HCT116 (cell line): ENCODE measurements at regions of chr12 and their contacts with region 1.

Region 1: DNA sequence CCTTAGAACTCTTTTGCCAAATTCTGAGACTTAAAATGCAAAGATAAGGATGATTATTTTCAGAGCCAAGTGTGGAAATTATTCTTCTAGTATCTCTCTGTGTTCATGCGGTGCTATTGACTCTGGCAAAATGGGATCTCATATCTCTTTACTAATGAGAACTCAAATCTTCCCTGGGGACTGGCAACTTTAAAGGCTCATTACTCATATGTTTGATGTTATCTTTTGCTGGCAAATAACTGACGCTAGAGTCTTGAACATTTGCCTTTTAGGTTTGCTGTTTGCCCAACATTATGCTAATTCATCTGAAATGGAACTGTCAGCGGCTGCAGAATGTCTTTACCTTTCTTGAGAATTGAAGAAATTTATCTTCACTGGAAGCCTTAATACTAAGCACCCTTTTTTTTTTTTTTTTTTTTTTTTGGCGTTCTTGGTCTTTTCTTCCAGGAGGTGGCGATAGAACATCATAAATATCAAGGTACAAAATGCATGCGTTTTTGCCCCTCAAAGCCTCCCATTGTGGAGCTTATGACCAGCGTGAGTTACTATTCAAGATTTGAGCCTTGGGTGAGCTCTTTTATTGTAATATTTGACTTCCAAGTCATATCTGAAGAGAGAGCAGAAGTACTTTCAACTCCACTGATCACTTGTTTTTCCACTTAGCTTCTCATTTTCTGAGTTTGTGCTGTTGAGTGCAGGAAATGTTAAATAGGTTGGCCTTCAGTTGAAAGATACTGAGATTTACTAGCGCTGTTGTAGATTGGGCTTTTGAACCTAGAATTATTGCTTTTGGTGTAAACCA is 86.6 kb downstream of the CAND1 start:
- DNase-seq: peak; percentile 34
- ATAC-seq: peak; percentile 73
- H3K4me3 ChIP-seq: no peak overlapping the region
- H3K27ac ChIP-seq: no peak overlapping the region
- H3K4me1 ChIP-seq: no peaks in the 10 kb centered on the region
- H3K27me3 ChIP-seq: no peaks in the 10 kb centered on the region
- CTCF ChIP-seq: peak; percentile 48 to 82 (median 67)
- POLR2A ChIP-seq: no peak
- RAD21 ChIP-seq: peak; percentile 78

Region 2: GRCh38 chr12:67415473-67415872 is 59.7 kb after region 1 on chr12:
- CTCF ChIA-PET with region 1: no interaction called
- POLR2A ChIA-PET with region 1: no interaction called
- RAD21 ChIA-PET with region 1: no interaction called
- intact Hi-C with region 1: loop called (anchors 1 kb)
- DNase-seq: peak; percentile 22
- ATAC-seq: peak; percentile 89
- H3K4me3 ChIP-seq: no peak overlapping the region
- H3K27ac ChIP-seq: no peak overlapping the region
- H3K4me1 ChIP-seq: no peaks in the 10 kb centered on the region
- H3K27me3 ChIP-seq: no peaks in the 10 kb centered on the region
- CTCF ChIP-seq: peak; percentile 52 to 87 (median 55)
- POLR2A ChIP-seq: no peak
- RAD21 ChIP-seq: peak; percentile 68

Region 3: DNA sequence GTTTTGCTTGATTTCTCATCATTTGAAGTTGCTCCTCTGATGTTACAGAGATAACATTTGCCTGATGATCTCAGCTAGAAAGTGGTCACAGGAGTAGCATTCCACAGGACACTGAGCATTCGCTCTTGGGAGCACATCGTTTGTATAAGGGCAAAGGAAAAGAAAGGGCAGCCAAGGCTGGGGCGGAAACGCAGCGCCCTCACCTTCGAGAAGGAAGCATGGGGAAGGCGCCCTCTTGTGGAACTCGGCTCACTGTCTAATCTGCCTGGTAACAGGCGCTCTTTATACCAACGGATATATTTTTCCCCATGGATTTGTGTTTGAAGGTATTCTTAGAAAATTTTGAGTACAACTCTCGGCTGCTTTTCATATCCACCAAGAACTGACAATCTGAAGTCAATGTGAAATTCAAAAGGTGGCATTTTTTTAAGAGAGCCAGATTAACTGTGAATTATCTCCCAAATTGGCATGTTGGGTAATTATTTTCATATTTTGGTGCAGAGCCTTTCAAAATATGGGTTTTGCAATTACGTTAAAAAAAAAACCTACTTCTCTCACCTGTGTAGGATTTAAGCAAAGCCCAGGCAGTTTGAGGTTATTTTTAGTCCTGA is 86.1 kb after region 1 on chr12:
- CTCF ChIA-PET with region 1: interaction called, 4 read pairs
- POLR2A ChIA-PET with region 1: no interaction called
- RAD21 ChIA-PET with region 1: no interaction called
- intact Hi-C with region 1: loop called (anchors 2 kb)
- DNase-seq: peak; percentile 61
- ATAC-seq: peak; percentile 99
- H3K4me3 ChIP-seq: no peak overlapping the region
- H3K27ac ChIP-seq: no peak overlapping the region
- H3K4me1 ChIP-seq: 0 out of 4 replicates have a peak, but pooled peaks cover 0 to 4% of the 10 kb centered on the region in 2 experiments
- H3K27me3 ChIP-seq: no peaks in the 10 kb centered on the region
- CTCF ChIP-seq: peak; percentile 81 to 92 (median 84)
- POLR2A ChIP-seq: no peak
- RAD21 ChIP-seq: peak; percentile 72

Region 4: DNA sequence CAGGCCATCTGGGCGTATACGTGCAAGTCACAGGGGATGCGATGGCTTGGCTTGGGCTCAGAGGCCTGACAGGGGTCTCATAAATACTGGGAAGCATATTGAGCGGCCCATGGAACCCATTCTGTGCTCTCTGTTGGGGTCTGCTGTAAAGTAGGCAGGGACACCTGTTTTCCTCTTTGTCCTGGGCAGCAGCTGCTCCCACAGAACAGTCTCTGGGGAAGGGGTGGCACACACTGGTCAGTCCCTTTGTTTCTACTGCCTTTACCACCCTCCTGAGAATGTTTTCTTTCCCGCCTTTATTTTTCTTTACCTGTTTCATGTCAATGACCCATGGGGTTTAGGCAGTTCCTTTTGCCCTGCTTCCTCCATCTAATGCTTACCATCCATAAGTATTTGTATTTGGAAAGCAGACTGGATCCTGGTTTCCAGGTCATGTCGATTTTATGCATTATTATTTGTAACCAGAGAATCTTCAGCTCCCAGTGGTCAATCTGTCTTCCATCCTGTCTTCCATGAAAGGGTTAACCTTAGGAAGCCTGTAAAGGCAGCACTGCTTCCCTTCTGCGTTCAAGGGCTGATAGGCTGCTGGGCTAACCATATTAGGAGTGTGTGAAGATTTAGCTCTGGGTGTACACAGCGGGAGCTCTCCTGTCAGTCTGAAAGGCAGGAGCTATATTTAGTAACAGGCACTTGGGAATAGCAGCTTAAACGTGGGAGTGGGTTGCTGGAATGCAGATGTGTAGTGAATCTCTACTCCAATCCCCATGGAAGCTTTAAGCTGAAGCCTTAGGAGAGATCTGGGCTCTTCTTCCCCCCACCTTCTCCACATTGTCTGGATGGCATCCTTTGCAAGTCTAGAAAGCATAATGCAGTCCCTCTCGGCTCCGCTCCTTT is 416.7 kb after region 1 on chr12:
- CTCF ChIA-PET with region 1: no interaction called
- POLR2A ChIA-PET with region 1: no interaction called
- RAD21 ChIA-PET with region 1: no interaction called
- intact Hi-C with region 1: no loop called
- DNase-seq: no peak
- ATAC-seq: peak; percentile 68; the same call in 1 of the 2 replicates
- H3K4me3 ChIP-seq: no peak overlapping the region
- H3K27ac ChIP-seq: no peak overlapping the region
- H3K4me1 ChIP-seq: peaks cover 0 to 8% of the 10 kb centered on the region in 2 experiments; a peak in 3 of 4 replicates
- H3K27me3 ChIP-seq: no peaks in the 10 kb centered on the region
- CTCF ChIP-seq: no peak
- POLR2A ChIP-seq: no peak
- RAD21 ChIP-seq: no peak

Region 5: GRCh38 chr12:67943226-67943892 is 587.6 kb after region 1 on chr12:
- CTCF ChIA-PET with region 1: interaction called, 32 read pairs
- POLR2A ChIA-PET with region 1: no interaction called
- RAD21 ChIA-PET with region 1: no interaction called
- intact Hi-C with region 1: loop called (anchors 1 kb)
- DNase-seq: peak; percentile 39
- ATAC-seq: peak; percentile 92
- H3K4me3 ChIP-seq: no peak overlapping the region
- H3K27ac ChIP-seq: no peak overlapping the region
- H3K4me1 ChIP-seq: no peaks in the 10 kb centered on the region
- H3K27me3 ChIP-seq: no peaks in the 10 kb centered on the region
- CTCF ChIP-seq: peak; percentile 47 to 81 (median 70)
- POLR2A ChIP-seq: no peak
- RAD21 ChIP-seq: peak; percentile 82

Region 6: GRCh38 chr12:68001486-68002466 is 646.0 kb after region 1 on chr12:
- CTCF ChIA-PET with region 1: no interaction called
- POLR2A ChIA-PET with region 1: no interaction called
- RAD21 ChIA-PET with region 1: interaction called in 1 of 2 experiments, 3 read pairs
- intact Hi-C with region 1: loop called (anchors 2 kb)
- DNase-seq: no peak
- ATAC-seq: peak; percentile 58
- H3K4me3 ChIP-seq: no peak overlapping the region
- H3K27ac ChIP-seq: no peak overlapping the region
- H3K4me1 ChIP-seq: no peaks in the 10 kb centered on the region
- H3K27me3 ChIP-seq: no peaks in the 10 kb centered on the region
- CTCF ChIP-seq: peak; percentile 36 to 62 (median 50); a peak in 5 of 6 replicates
- POLR2A ChIP-seq: no peak
- RAD21 ChIP-seq: peak; percentile 57

Region 7: GRCh38 chr12:68223083-68223747 is 867.4 kb after region 1 on chr12:
- CTCF ChIA-PET with region 1: interaction called, 3 read pairs
- POLR2A ChIA-PET with region 1: no interaction called
- RAD21 ChIA-PET with region 1: no interaction called
- intact Hi-C with region 1: loop called (anchors 2 kb)
- DNase-seq: peak; percentile 76
- ATAC-seq: peak; percentile 100
- H3K4me3 ChIP-seq: peak overlapping the region in 1 of 2 experiments; percentile 34; a peak in 2 of 4 replicates
- H3K27ac ChIP-seq: no peak overlapping the region
- H3K4me1 ChIP-seq: peaks cover 0 to 8% of the 10 kb centered on the region in 2 experiments; a peak in 1 of 4 replicates
- H3K27me3 ChIP-seq: no peaks in the 10 kb centered on the region
- CTCF ChIP-seq: peak; percentile 71 to 91 (median 81)
- POLR2A ChIP-seq: no peak
- RAD21 ChIP-seq: peak; percentile 93

Region 8: DNA sequence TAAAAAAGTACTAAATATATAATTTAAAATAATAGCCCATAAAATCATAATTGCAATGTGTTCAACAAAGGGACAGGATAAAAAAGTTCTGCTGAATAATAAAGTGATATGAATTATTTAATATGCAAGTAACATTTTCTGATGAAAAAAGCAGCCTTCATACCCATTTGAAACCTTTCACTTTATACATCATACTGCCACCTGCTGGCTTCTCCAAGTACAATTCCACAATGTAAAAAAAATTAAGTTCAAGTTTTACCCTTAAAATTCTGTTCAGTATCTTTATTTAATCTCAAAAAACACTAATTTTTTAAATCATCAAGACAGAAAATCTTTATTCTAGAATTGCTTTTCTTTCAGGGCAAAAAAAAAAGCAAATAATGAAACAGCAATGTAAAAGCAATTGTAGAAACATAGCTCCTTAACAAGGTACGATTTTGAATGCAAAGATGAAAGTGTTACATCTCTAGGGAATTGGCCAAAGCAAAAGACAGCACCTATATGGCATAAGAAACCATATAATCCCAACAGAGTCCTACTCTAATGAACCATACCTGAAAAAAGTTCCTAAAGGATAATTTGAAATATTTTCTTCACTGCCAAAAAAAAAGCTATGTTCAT is 961.4 kb after region 1 on chr12:
- CTCF ChIA-PET with region 1: interaction called, 6 read pairs
- POLR2A ChIA-PET with region 1: no interaction called
- RAD21 ChIA-PET with region 1: no interaction called
- intact Hi-C with region 1: loop called (anchors 2 kb)
- DNase-seq: peak; percentile 27
- ATAC-seq: no peak
- H3K4me3 ChIP-seq: no peak overlapping the region
- H3K27ac ChIP-seq: no peak overlapping the region
- H3K4me1 ChIP-seq: no peaks in the 10 kb centered on the region
- H3K27me3 ChIP-seq: no peaks in the 10 kb centered on the region
- CTCF ChIP-seq: peak; percentile 49 to 63 (median 60); a peak in 5 of 6 replicates
- POLR2A ChIP-seq: no peak
- RAD21 ChIP-seq: peak; percentile 63